Colonic mucosa (tissue), 4 donors: ENCODE measurements at regions of chr11 and their contacts with region 1.

Region 1: DNA sequence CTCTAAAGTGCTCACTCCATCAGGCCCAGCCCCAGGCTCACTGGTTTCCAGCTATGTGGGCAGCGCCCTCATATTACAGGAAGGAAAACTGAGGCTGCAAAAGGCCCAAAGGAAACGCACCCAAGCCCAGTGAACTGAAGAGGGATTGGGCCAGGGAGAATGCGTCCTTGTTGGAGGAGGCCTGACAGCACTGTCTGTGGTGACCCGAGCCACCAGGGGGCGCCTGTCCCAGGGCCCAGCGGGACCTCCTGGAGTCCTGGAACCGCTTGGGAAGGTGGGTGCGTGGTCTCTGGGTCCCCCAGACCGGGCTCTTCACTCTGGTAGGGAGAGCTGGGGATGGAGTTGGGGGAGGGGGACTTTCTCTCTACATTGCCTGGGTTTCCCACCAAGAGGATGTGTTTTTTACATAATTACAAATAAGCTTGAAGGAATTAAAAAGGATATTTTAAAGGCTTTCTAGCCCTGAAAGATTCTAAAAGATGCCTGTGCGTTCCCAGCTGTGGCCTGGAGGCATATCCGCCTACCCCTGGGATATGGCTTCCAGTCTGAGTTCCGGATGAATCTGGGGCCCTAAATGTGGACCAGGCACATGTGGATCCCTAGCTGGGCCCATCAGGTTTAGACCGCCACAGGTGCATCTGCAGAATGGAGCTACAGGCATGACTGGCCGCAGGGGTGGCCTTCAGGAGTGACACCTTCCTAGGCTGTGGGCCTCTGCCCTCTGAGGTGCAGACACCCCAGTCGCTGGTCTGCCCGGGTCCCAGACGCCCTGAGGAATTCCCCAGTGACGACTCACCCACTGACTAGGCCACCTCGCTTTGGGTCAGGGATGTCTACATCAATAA is 4.2 kb downstream of the SPI1 start:
- DNase-seq: peak; percentile 83
- H3K4me3 ChIP-seq: no peak overlapping the region
- H3K27ac ChIP-seq: no peak overlapping the region
- H3K4me1 ChIP-seq: no peaks in the 10 kb centered on the region
- H3K27me3 ChIP-seq: no peaks in the 10 kb centered on the region
- CTCF ChIP-seq: peak; percentile 96

Region 2: DNA sequence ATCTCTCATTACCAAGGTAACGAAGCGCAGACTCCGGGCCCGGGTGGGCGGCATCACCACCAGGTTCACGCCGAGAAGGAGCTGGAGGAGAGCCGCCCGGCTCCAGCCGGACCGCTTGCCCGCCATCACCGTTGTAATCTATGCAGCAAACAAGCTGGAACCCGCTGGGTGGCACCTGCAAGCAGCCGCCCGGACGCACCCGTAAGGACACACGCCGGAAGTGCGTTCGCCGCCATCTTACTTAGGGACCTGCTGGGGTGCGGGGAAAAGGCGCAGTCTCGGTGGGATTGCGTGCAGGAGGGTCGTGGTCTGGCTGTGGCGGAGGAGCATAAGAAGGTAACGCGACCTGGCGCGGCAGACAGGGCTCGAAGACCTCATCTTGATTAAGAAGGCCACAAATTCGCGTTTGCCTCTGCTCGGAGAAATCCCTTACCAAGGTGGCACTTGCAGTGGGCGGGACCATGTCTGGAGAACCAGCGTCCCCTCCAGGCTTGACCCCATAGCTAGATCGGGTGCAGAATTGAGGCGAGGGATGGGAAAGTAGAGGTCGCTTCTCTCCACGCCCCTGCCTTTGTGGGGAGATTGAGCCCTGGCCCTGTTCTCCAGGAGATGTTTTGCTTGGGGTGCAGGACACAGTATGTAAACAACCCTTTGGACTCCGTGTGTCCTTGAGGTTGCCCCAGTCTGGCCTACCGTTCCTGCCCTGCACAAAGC is 125.3 kb before region 1 on chr11 and contains the start of gene ACP2:
- intact Hi-C with region 1: no loop called
- DNase-seq: peak; percentile 92
- H3K4me3 ChIP-seq: peak within 1 kb of the TSS; percentile 67
- H3K27ac ChIP-seq: peak within 1 kb of the TSS; percentile 73
- H3K4me1 ChIP-seq: no peaks in the 10 kb centered on the region
- H3K27me3 ChIP-seq: no peaks in the 10 kb centered on the region
- CTCF ChIP-seq: no peak
- total RNA-seq, gene ACP2: 35.3 to 39.7 TPM

Region 3: GRCh38 chr11:47454180-47454644 is 80.1 kb after region 1 on chr11:
- intact Hi-C with region 1: loop called (anchors 5 kb)
- DNase-seq: peak; percentile 78
- H3K4me3 ChIP-seq: no peak overlapping the region
- H3K27ac ChIP-seq: no peak overlapping the region
- H3K4me1 ChIP-seq: no peaks in the 10 kb centered on the region
- H3K27me3 ChIP-seq: no peaks in the 10 kb centered on the region
- CTCF ChIP-seq: peak; percentile 58

Region 4: DNA sequence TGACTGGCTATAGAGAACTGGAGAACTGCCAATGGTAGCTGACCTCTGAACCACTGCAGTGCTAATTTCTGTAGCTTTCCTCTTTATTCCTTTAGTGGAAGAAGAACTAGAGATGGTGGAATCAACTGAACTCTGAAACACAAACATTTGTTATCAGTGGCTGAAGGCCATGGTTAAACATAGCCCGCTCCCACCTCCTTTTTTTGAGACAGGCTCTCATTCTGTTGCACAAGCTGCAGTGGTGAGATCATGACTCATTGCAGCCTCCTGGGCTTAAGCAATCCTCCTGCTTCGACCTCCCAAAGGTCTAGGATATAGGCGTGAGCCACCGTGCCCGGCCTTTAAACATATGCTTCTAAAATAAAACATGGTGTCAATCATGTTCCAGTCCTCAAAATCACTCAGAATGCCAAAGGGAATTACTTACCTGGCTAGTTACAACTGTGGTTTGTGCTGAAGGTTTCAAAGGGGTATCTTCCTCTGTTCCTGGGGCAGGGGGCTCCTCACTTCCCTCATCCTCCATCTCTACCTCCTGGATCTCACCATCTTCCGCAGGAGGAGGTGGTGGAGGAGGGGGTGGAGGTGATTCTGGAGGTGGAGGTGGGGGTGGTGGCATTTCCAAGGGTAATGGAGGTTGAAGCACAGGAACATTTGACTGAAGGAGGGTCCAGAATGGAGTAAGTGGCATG is 350.1 kb after region 1 on chr11:
- intact Hi-C with region 1: no loop called
- DNase-seq: peak; percentile 78
- H3K4me3 ChIP-seq: no peak overlapping the region
- H3K27ac ChIP-seq: peak overlapping the region; percentile 58
- H3K4me1 ChIP-seq: no peaks in the 10 kb centered on the region
- H3K27me3 ChIP-seq: no peaks in the 10 kb centered on the region
- CTCF ChIP-seq: no peak

Region 5: GRCh38 chr11:47858169-47858543 is 484.1 kb after region 1 on chr11:
- intact Hi-C with region 1: loop called (anchors 10 kb)
- DNase-seq: no peak
- H3K4me3 ChIP-seq: no peak overlapping the region
- H3K27ac ChIP-seq: no peak overlapping the region
- H3K4me1 ChIP-seq: no peaks in the 10 kb centered on the region
- H3K27me3 ChIP-seq: no peaks in the 10 kb centered on the region
- CTCF ChIP-seq: no peak